CD8-positive, alpha-beta memory T cell (primary cell): ENCODE measurements at regions of chr1 and their contacts with region 1.

Region 1: DNA sequence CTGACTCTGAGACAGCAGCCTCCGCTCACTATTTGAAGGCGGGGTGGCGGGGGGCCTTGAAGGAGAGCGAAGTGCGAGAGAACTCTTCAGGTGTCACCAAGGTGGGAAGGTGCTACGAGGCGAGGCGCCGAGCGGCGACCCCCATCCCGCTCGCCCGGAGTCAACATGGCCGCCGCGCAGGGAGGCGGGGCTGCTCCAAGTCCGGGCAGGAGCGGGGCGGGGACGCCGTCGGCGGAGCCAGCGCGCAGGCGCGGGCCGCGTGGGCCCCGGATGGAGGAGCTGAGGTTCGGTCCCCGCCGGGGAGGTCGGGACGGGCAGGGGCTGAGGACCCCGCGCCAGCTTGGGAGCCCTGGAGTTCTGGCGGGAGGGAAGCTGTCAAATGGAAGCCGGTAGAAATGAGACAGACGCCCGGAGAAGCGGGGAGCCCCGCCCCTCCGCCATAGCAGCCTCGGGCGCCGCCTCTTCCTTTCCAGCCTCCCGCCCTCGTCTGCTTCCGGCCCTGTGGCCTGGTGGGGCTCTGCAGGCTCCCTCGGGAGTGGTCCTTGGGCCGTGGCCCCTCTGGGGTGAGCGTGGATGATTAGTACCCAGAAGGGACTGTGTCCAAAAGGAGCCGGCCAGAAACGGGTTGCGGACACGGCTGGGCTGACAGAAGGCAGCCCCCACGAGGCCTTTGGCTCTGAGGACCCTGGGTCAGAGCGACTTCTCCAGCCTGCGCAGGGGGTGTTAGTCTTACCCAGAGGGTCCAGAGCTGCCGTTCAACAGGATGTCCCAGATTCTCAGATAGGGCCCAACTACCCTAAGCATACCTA is at the start of gene PIGV:
- DNase-seq: peak; percentile 82 to 93 (median 89)
- H3K4me3 ChIP-seq: peak within 1 kb of the TSS; percentile 92
- H3K4me3 Mint-ChIP-seq: peak within 1 kb of the TSS; percentile 90 to 100 (median 100)
- H3K27ac ChIP-seq: peak within 1 kb of the TSS; percentile 88
- H3K27ac Mint-ChIP-seq: peak within 1 kb of the TSS; percentile 100
- H3K4me1 ChIP-seq: peaks cover 71% of the 10 kb centered on the region
- H3K4me1 Mint-ChIP-seq: peaks cover 73 to 87% (median 81%) of the 10 kb centered on the region in 3 donors
- H3K27me3 ChIP-seq: no peaks in the 10 kb centered on the region
- H3K27me3 Mint-ChIP-seq: peaks cover 0 to 5% of the 10 kb centered on the region in 2 donors
- total RNA-seq, gene PIGV: 23.6 to 24.9 TPM

Region 2: GRCh38 chr1:26602378-26602959 is 185.4 kb before region 1 on chr1:
- CTCF ChIA-PET with region 1: interaction called, 203 read pairs
- POLR2A ChIA-PET with region 1: interaction called, 22 read pairs
- DNase-seq: peak in 3 of 5 donors; percentile 30 to 61 (median 56)
- H3K4me3 ChIP-seq: no peak overlapping the region
- H3K4me3 Mint-ChIP-seq: no peak overlapping the region
- H3K27ac ChIP-seq: no peak overlapping the region
- H3K27ac Mint-ChIP-seq: no peak overlapping the region
- H3K4me1 ChIP-seq: peaks cover 8% of the 10 kb centered on the region
- H3K4me1 Mint-ChIP-seq: peaks cover 7 to 10% (median 9%) of the 10 kb centered on the region in 3 donors
- H3K27me3 ChIP-seq: no peaks in the 10 kb centered on the region
- H3K27me3 Mint-ChIP-seq: peaks cover 0 to 2% of the 10 kb centered on the region in 2 donors

Region 3: DNA sequence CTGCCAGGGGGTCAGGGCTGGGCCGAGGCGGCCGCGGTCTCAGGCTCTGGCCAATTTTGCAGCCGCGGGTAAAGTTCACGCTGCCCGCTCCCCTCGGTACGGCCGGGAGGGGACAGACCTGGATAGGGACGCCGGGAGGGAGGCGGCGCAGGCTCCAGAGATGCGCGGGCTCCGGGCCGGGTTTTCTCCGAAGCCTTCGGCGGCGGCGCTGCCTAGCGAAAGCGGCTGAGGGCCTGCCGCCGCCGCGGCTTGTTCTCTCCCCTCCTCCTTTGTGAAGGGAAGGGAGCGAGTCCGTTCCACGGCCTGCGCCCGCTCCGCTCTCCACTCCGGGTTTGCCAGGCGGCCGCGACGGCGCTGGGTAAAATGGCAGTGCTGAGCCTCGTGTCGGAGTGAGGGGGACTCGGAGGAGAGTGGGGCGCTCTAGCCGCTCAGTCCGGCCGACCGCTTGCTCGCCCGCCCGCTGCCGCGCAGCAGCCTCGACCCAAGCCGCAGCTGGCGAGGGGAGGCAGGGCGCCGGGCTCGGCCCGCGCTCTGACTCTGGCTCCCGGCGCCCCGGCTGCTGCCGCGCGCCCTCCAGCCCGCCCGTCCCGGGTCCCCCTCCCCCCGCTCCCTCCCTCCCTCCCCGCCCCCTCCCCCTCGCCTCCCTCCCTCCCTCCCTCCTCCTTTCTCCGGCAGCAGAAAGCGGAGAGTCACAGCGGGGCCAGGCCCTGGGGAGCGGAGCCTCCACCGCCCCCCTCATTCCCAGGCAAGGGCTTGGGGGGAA is 92.4 kb before region 1 on chr1 and contains the start of gene ARID1A:
- CTCF ChIA-PET with region 1: interaction called, 79 read pairs
- POLR2A ChIA-PET with region 1: interaction called, 86 read pairs
- DNase-seq: peak; percentile 93 to 99 (median 96)
- H3K4me3 ChIP-seq: peak within 1 kb of the TSS; percentile 83
- H3K4me3 Mint-ChIP-seq: peak within 1 kb of the TSS; percentile 90 to 97 (median 94)
- H3K27ac ChIP-seq: peak within 1 kb of the TSS; percentile 86
- H3K27ac Mint-ChIP-seq: peak within 1 kb of the TSS; percentile 85 to 96 (median 94)
- H3K4me1 ChIP-seq: peaks cover 46% of the 10 kb centered on the region
- H3K4me1 Mint-ChIP-seq: peaks cover 28 to 38% (median 30%) of the 10 kb centered on the region in 3 donors
- H3K27me3 ChIP-seq: no peaks in the 10 kb centered on the region
- H3K27me3 Mint-ChIP-seq: no peaks in the 10 kb centered on the region
- total RNA-seq, gene ARID1A: 88.4 to 90.9 TPM

Region 4: DNA sequence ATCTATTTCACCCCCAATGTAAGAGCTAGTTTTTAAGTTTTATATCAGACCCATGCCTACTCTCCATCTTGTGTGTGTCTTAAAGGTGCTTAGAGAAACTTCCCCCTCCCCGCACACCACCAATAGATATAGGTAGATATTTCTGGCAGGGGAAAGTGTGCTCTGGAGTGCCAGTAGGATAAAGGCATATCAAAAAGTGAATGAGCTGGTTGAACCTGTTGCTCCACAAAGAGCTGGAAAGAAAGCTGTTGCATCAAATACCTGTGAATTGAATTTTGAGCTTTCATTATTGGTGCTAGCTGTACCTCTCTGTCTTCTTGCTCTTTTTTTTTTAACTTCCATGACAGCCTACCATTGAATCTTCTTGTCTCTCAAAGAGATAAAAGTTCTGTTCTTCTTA is 59.3 kb before region 1 on chr1:
- CTCF ChIA-PET with region 1: interaction called, 19 read pairs
- POLR2A ChIA-PET with region 1: no interaction called
- DNase-seq: no peak
- H3K4me3 ChIP-seq: no peak overlapping the region
- H3K4me3 Mint-ChIP-seq: peak overlapping the region in 2 of 7 donors; percentile 29 to 32
- H3K27ac ChIP-seq: no peak overlapping the region
- H3K27ac Mint-ChIP-seq: peak overlapping the region; percentile 20 to 94 (median 72)
- H3K4me1 ChIP-seq: peaks cover 67% of the 10 kb centered on the region
- H3K4me1 Mint-ChIP-seq: peaks cover 66 to 91% (median 87%) of the 10 kb centered on the region in 3 donors
- H3K27me3 ChIP-seq: no peaks in the 10 kb centered on the region
- H3K27me3 Mint-ChIP-seq: no peaks in the 10 kb centered on the region

Region 5: GRCh38 chr1:26799479-26800142 is 11.7 kb after region 1 on chr1:
- CTCF ChIA-PET with region 1: interaction called, 55 read pairs
- POLR2A ChIA-PET with region 1: interaction called, 26 read pairs
- DNase-seq: peak in 1 of 5 donors; percentile 55
- H3K4me3 ChIP-seq: peak overlapping the region; percentile 10
- H3K4me3 Mint-ChIP-seq: peak overlapping the region; percentile 4 to 83 (median 77)
- H3K27ac ChIP-seq: peak overlapping the region; percentile 65
- H3K27ac Mint-ChIP-seq: peak overlapping the region; percentile 94 to 98 (median 97)
- H3K4me1 ChIP-seq: peaks cover 37% of the 10 kb centered on the region
- H3K4me1 Mint-ChIP-seq: peaks cover 38 to 59% (median 55%) of the 10 kb centered on the region in 3 donors
- H3K27me3 ChIP-seq: no peaks in the 10 kb centered on the region
- H3K27me3 Mint-ChIP-seq: no peaks in the 10 kb centered on the region

Region 6: DNA sequence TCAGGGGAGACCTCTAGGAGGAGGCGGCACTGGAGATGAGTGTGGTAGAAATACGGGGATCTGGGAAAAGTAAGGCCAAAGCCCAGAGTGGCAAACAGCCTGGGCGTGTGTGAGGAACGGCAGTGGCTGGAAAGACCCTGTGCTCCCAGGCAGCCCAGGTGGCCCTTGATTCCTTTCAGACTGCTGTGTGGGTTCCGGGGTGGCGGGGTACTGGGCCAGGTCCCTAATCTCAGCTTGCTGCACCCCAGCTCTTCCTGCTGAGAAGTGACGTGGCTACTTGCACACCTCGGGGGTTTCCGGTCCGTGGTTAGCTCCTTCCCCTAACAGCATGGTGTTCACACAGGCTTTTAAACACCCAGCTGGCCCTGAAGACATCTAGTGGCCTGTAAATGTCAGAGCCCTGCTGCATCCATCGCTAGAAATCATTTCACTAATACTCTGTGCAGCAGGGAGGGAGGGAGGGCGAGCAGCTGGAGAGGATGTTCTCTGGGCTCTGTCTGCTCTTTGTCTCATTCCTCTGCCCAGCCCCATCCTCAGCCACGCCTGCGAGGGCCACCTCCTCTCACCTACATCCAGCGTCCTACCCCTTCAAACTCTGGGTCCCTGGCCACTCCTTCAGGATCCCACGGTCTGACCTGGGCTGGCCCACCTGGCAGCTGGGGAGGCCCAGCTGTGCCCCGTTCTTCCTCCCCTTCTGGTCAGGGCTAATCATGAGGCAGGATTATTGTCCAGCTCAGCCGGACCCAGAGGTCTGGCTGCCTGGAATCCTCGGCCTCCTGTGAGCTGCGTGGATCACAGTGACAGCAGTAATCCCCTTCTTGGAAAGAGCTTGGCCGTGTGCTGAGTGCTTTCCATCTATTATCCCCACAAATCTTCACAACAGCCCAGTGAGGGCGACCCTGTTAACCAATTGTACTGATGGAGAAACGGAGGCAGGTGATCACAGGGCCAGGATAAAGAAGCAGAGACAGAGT is 45.8 kb after region 1 on chr1:
- CTCF ChIA-PET with region 1: interaction called, 22 read pairs
- POLR2A ChIA-PET with region 1: interaction called, 5 read pairs
- DNase-seq: peak; percentile 88 to 96 (median 90)
- H3K4me3 ChIP-seq: peak overlapping the region; percentile 50
- H3K4me3 Mint-ChIP-seq: peak overlapping the region; percentile 31 to 84 (median 71)
- H3K27ac ChIP-seq: peak overlapping the region; percentile 85
- H3K27ac Mint-ChIP-seq: peak overlapping the region; percentile 98 to 100 (median 100)
- H3K4me1 ChIP-seq: peaks cover 58% of the 10 kb centered on the region
- H3K4me1 Mint-ChIP-seq: peaks cover 68 to 76% (median 76%) of the 10 kb centered on the region in 3 donors
- H3K27me3 ChIP-seq: no peaks in the 10 kb centered on the region
- H3K27me3 Mint-ChIP-seq: peaks cover 0 to 2% of the 10 kb centered on the region in 2 donors